ENCODE measurements at regions of chr20 and their contacts with region 1.

Region 1: DNA sequence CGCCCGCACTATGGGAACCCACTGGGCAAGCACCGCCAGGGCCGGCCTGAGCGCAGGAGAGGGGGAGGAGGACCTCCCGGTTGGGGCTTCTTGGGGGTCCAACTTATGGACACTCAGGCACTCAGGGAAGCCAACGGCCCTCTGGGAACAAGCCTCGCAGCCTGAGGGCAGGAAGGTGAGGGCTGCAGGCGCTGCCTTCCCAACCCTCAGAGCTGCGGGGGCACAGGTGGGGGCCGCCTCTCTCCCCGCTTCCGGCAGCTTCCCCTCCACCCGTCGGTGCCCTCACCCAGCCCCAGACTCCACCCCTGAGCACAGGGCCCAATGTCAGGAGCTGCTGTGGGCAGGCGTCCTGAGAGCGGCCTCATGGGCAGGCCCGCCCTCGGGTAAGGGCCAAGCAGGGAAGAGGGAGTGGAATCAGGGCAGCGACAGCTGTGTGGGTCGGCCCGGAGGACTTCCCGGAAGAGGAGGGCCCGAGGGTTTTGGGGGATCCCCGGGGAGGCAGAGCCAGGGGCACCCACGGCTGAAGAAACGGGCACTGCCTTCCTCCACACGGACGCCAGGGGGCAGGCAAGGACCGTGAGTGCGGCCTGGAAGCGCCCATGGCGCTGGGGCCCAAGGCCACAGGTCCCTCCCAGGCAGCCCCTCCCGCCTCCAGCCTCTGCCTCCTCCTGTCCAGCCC is 488 bp upstream of the PTK6 start:
- DNase-seq: peak; percentile 98
- ATAC-seq: peak; percentile 97
- H3K4me3 Mint-ChIP-seq: peak overlapping the region; percentile 68
- H3K27ac Mint-ChIP-seq: peak overlapping the region; percentile 85
- H3K4me1 Mint-ChIP-seq: peaks cover 8% of the 10 kb centered on the region
- H3K27me3 Mint-ChIP-seq: no peaks in the 10 kb centered on the region

Region 2: GRCh38 chr20:63434599-63435378 is 102.9 kb before region 1 on chr20:
- CTCF ChIA-PET with region 1: interaction called, 4 read pairs
- POLR2A ChIA-PET with region 1: no interaction called
- intact Hi-C with region 1: loop called in 1 of 2 experiments (anchors 1 kb)
- DNase-seq: peak; percentile 90
- ATAC-seq: peak; percentile 80
- H3K4me3 Mint-ChIP-seq: peak overlapping the region; percentile 19
- H3K27ac Mint-ChIP-seq: peak overlapping the region; percentile 58
- H3K4me1 Mint-ChIP-seq: peaks cover 6% of the 10 kb centered on the region
- H3K27me3 Mint-ChIP-seq: peaks cover 8% of the 10 kb centered on the region

Region 3: DNA sequence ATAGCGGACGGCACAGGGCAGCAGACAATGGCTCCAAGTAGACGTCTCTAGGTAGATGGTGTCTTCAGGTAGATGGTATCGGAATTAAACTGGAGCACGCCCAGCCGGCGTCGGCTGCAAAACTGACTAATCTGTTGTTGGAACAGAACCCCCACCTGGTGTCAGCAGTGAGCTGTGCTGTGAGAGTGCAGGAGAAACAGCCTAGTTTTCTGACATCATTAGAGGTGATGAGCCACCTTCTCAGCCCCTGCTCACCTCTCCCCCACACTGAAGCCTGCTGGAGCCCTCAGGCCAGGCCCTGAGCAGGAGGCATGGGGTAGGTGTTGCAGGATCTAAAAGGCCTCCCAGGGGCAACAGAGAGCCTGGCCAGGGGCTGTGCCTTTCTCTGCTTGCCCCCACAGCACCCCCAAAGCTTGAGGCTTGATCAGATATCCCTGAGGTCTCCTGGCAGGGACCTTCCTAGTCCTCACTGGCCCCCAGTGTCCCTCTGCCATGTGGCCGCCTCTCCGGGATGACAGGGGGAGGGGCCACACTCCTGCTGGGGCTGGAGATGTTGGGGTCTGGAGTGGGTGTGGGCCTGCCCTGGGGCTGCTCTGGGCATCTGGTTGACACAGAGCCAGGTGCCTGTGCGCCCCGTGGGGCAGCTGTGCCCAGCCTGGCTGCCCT is 43.3 kb after region 1 on chr20:
- CTCF ChIA-PET with region 1: interaction called, 3 read pairs
- POLR2A ChIA-PET with region 1: no interaction called
- intact Hi-C with region 1: loop called in 1 of 2 experiments (anchors 1 kb)
- DNase-seq: peak; percentile 88
- ATAC-seq: peak; percentile 100
- H3K4me3 Mint-ChIP-seq: no peak overlapping the region
- H3K27ac Mint-ChIP-seq: no peak overlapping the region
- H3K4me1 Mint-ChIP-seq: peaks cover 4% of the 10 kb centered on the region
- H3K27me3 Mint-ChIP-seq: peaks cover 2% of the 10 kb centered on the region

Region 4: GRCh38 chr20:63657937-63658748 is 120.5 kb after region 1 on chr20 and contains the start of gene RTEL1:
- CTCF ChIA-PET with region 1: interaction called, 3 read pairs
- POLR2A ChIA-PET with region 1: no interaction called
- intact Hi-C with region 1: loop called in 1 of 2 experiments (anchors 1 kb)
- DNase-seq: peak; percentile 92
- ATAC-seq: peak; percentile 82
- H3K4me3 Mint-ChIP-seq: peak within 1 kb of the TSS; percentile 95
- H3K27ac Mint-ChIP-seq: peak within 1 kb of the TSS; percentile 94
- H3K4me1 Mint-ChIP-seq: peaks cover 30% of the 10 kb centered on the region
- H3K27me3 Mint-ChIP-seq: no peaks in the 10 kb centered on the region
- total RNA-seq, gene RTEL1: 44.5 to 44.7 TPM

Region 5: GRCh38 chr20:63791497-63792156 is 254.0 kb after region 1 on chr20:
- CTCF ChIA-PET with region 1: no interaction called
- POLR2A ChIA-PET with region 1: no interaction called
- intact Hi-C with region 1: loop called (anchors 1 to 5 kb)
- DNase-seq: no peak
- ATAC-seq: no peak
- H3K4me3 Mint-ChIP-seq: no peak overlapping the region
- H3K27ac Mint-ChIP-seq: no peak overlapping the region
- H3K4me1 Mint-ChIP-seq: peaks cover 2% of the 10 kb centered on the region
- H3K27me3 Mint-ChIP-seq: peaks cover 2% of the 10 kb centered on the region

Region 6: GRCh38 chr20:63980806-63981728 is 443.4 kb after region 1 on chr20 and contains the start of gene PRPF6:
- CTCF ChIA-PET with region 1: no interaction called
- POLR2A ChIA-PET with region 1: no interaction called
- intact Hi-C with region 1: loop called in 1 of 2 experiments (anchors 1 kb)
- DNase-seq: peak; percentile 98
- ATAC-seq: peak; percentile 47
- H3K4me3 Mint-ChIP-seq: peak within 1 kb of the TSS; percentile 97
- H3K27ac Mint-ChIP-seq: peak within 1 kb of the TSS; percentile 98
- H3K4me1 Mint-ChIP-seq: peaks cover 59% of the 10 kb centered on the region
- H3K27me3 Mint-ChIP-seq: no peaks in the 10 kb centered on the region
- total RNA-seq, gene PRPF6: 60.5 to 67.0 TPM